ENCODE measurements at regions of chr15 and their contacts with region 1.

Region 1: DNA sequence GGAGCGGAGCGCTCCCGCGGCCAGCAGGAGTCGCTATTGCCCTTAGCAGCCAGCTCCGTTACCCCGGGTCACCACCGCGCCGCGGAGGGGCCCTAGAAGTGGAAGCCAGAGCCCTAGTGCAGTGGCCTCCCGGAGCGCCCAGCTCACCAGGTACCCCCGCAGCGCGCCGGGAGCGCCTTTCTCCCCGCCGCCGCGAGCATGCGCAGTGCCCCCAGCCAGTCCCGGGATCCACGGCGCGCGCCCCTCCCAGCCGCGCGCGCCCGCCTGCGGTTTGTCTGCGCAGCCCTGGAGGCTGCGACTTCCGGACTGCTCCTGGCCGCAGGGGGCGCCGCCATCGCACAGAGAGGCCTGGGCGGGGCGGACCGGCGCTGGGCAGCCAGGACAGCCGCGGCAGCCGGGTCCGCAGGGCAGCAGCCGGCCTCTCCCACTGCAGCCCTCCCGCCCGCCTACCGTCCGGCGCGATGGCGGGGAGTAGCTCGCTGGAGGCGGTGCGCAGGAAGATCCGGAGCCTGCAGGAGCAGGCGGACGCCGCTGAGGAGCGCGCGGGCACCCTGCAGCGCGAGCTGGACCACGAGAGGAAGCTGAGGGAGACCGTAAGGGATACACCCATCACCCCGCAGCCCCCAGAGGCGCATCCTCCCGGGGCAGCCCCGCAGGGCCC is 5.7 kb downstream of the TPM1 start:
- DNase-seq: peak; percentile 85
- ATAC-seq: peak; percentile 75
- H3K4me3 ChIP-seq: peak overlapping the region; percentile 81
- H3K27ac ChIP-seq: peak overlapping the region; percentile 89
- H3K4me1 ChIP-seq: peaks cover 64% of the 10 kb centered on the region
- H3K27me3 ChIP-seq: no peaks in the 10 kb centered on the region
- CTCF ChIP-seq: peak; percentile 75

Region 2: GRCh38 chr15:62719316-62719715 is 328.9 kb before region 1 on chr15:
- CTCF ChIA-PET with region 1: no interaction called
- POLR2A ChIA-PET with region 1: no interaction called
- intact Hi-C with region 1: no loop called
- DNase-seq: no peak
- ATAC-seq: no peak
- H3K4me3 ChIP-seq: no peak overlapping the region
- H3K27ac ChIP-seq: no peak overlapping the region
- H3K4me1 ChIP-seq: no peaks in the 10 kb centered on the region
- H3K27me3 ChIP-seq: no peaks in the 10 kb centered on the region
- CTCF ChIP-seq: no peak

Region 3: DNA sequence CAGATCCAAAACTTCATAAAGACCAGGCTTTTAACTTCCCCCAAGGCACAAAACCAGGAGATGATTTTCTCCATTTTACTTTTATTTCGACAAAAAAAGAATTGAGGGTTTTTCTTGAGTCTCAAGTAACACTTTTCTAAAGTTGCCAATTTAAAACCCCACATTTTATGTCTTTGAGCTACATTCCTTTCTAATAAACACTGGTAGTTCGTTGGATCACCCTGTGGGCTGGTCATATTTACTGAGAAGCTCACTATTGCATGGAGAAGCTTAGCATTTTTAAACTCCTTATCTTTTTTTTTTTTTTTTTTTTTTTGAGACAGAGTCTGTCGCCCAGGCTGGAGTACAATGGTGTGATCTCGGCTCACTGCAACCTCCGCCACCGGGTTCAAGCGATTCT is 260.8 kb before region 1 on chr15:
- CTCF ChIA-PET with region 1: no interaction called
- POLR2A ChIA-PET with region 1: interaction called, 10 read pairs
- intact Hi-C with region 1: loop called (anchors 5 kb)
- DNase-seq: no peak
- ATAC-seq: no peak
- H3K4me3 ChIP-seq: no peak overlapping the region
- H3K27ac ChIP-seq: no peak overlapping the region
- H3K4me1 ChIP-seq: peaks cover 6% of the 10 kb centered on the region; the same call in 1 of the 2 replicates
- H3K27me3 ChIP-seq: no peaks in the 10 kb centered on the region
- CTCF ChIP-seq: no peak

Region 4: DNA sequence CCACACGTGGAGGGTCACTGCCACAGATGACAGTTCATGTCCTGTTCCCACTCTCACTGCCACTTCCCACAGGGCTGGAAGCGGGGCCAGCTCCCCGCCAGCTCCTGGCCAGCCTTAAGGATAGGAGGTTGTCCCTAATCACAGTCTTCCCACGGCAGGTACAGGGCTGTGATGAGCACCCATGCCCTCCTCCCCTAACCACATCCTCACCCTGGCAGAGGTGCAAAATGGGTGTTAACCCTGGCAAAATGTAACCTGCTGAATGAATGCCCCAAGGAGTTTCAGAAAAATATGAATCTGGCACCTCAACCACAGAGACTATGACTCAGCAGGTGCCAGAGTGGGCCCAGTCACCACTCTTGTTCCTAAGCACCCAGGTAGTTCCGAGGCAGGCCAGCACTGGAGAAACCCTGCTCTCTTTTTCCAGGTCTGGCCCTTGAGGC is 190.8 kb before region 1 on chr15:
- CTCF ChIA-PET with region 1: no interaction called
- POLR2A ChIA-PET with region 1: interaction called, 16 read pairs
- intact Hi-C with region 1: loop called (anchors 5 kb)
- DNase-seq: peak; percentile 96
- ATAC-seq: peak; percentile 88
- H3K4me3 ChIP-seq: no peak overlapping the region
- H3K27ac ChIP-seq: peak overlapping the region; percentile 96
- H3K4me1 ChIP-seq: peaks cover 46% of the 10 kb centered on the region
- H3K27me3 ChIP-seq: no peaks in the 10 kb centered on the region
- CTCF ChIP-seq: no peak

Region 5: GRCh38 chr15:63093486-63094205 is 45.4 kb after region 1 on chr15:
- CTCF ChIA-PET with region 1: interaction called, 4 read pairs
- POLR2A ChIA-PET with region 1: no interaction called
- intact Hi-C with region 1: loop called (anchors 1 kb)
- DNase-seq: peak; percentile 74
- ATAC-seq: peak; percentile 89
- H3K4me3 ChIP-seq: no peak overlapping the region
- H3K27ac ChIP-seq: no peak overlapping the region
- H3K4me1 ChIP-seq: peaks cover 5% of the 10 kb centered on the region; the same call in 1 of the 2 replicates
- H3K27me3 ChIP-seq: no peaks in the 10 kb centered on the region
- CTCF ChIP-seq: peak; percentile 84